CD4-positive, alpha-beta T cell (primary cell): ENCODE measurements at regions of chr7 and their contacts with region 1.

Region 1: DNA sequence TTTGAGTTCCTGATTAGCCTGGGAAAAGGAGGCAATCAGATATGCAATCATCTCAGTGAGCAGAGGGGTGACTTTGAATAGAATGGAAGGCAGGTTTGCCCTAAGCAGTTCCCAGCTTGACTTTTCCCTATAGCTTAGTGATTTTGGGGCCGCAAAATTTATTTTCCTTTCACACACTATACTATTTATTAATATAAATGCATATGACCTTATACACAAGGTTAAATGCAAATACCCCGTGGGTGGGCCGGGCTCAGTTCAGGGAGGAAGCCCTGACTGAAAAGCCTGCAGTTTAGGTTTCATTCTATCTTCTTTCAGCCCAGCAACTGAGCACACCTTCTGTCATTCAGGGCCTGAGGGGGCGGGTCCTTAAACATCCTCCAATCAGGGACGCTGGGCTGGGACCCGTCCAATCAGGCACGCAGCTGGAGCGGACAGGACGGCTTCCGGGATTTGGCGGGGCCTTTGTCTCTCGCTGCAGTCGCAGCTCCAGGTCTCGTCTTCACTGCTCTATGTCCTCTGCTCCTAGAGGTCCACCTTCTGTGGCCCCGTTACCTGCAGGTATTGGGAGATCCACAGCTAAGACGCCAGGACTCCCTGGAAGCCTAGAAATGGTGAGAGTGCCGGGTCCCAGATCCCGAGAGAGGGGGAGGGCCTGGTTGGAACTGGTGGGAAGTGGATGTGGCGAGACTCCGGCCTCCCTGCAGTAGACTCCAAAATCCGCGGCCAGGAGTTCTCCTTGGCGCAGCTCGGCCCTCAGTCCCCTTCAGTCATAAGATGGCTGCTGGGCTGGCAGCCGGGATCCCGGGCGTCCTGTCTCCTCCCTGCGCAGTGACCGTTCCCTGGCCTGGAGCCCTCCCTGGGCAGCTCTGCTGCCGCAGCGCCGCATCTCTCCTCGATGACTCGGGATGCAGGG is at the start of gene ZNF273:
- DNase-seq: peak; percentile 83 to 95 (median 87)
- ATAC-seq: peak; percentile 99
- H3K4me3 ChIP-seq: peak within 1 kb of the TSS; percentile 81
- H3K4me3 Mint-ChIP-seq: peak within 1 kb of the TSS; percentile 99
- H3K27ac ChIP-seq: peak within 1 kb of the TSS; percentile 26 to 64
- H3K27ac Mint-ChIP-seq: peak within 1 kb of the TSS; percentile 94
- H3K4me1 ChIP-seq: peaks cover 14% of the 10 kb centered on the region
- H3K4me1 Mint-ChIP-seq: peaks cover 51% of the 10 kb centered on the region
- H3K27me3 ChIP-seq: no peaks in the 10 kb centered on the region
- H3K27me3 Mint-ChIP-seq: no peaks in the 10 kb centered on the region
- CTCF ChIP-seq: no peak
- total RNA-seq, gene ZNF273: 6.8 TPM

Region 2: DNA sequence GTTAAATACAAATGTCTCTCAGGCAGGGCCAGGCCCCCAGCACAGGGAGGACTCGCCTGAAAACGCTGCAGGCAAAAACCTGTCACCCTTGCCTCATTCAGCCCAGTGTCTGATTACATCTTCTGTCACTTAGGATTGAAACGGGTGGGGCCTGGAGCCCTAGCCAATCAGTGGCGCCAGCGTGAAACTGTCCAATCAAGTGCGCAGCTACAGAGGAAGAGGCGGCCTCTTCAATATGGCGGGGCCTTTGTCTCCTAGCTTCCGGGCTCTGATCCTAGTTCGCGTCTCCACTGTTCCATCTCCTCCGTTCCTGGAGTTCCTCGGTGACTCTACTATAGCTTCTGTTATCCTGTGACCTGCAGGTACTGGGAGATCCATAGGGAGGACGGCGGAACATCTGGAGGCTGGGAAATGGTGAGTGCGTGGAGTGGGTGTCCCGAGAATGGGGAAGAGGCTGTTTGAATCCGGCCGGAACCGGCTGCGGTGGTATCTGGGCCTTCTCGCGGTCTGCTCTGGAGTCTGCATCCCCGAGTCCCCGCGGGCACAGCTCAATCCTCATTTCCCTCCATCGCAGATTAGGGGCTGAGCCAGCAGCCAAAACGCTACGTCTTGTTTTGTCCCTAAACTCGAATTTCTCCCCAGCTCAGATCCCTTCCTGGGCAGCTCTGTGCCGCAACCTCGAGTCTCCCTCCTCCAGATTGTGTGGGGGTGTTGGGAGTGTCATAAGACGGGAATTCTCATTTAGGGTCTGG is 589.1 kb before region 1 on chr7 and contains the start of gene ZNF736:
- CTCF ChIA-PET with region 1: no interaction called
- POLR2A ChIA-PET with region 1: interaction called, 7 read pairs
- intact Hi-C with region 1: loop called in 1 of 2 experiments (anchors 5 kb)
- DNase-seq: peak; percentile 76 to 95 (median 82)
- ATAC-seq: peak; percentile 100
- H3K4me3 ChIP-seq: peak within 1 kb of the TSS; percentile 99
- H3K4me3 Mint-ChIP-seq: peak within 1 kb of the TSS; percentile 96
- H3K27ac ChIP-seq: peak within 1 kb of the TSS in 1 of 2 donors; percentile 84
- H3K27ac Mint-ChIP-seq: peak within 1 kb of the TSS; percentile 93
- H3K4me1 ChIP-seq: peaks cover 23% of the 10 kb centered on the region
- H3K4me1 Mint-ChIP-seq: peaks cover 33% of the 10 kb centered on the region
- H3K27me3 ChIP-seq: no peaks in the 10 kb centered on the region
- H3K27me3 Mint-ChIP-seq: no peaks in the 10 kb centered on the region
- CTCF ChIP-seq: no peak
- total RNA-seq, gene ZNF736: 29.9 to 30.8 TPM

Region 3: GRCh38 chr7:64665980-64666662 is 236.9 kb before region 1 on chr7 and contains the start of gene ZNF107:
- CTCF ChIA-PET with region 1: no interaction called
- POLR2A ChIA-PET with region 1: interaction called, 19 read pairs
- intact Hi-C with region 1: loop called in 1 of 2 experiments (anchors 5 kb)
- DNase-seq: peak; percentile 71 to 96 (median 79)
- ATAC-seq: peak; percentile 95
- H3K4me3 ChIP-seq: peak within 1 kb of the TSS; percentile 83
- H3K4me3 Mint-ChIP-seq: peak within 1 kb of the TSS; percentile 98
- H3K27ac ChIP-seq: peak within 1 kb of the TSS; percentile 82
- H3K27ac Mint-ChIP-seq: peak within 1 kb of the TSS; percentile 98
- H3K4me1 ChIP-seq: peaks cover 23% of the 10 kb centered on the region
- H3K4me1 Mint-ChIP-seq: peaks cover 76% of the 10 kb centered on the region
- H3K27me3 ChIP-seq: no peaks in the 10 kb centered on the region
- H3K27me3 Mint-ChIP-seq: no peaks in the 10 kb centered on the region
- CTCF ChIP-seq: no peak
- total RNA-seq, gene ZNF107: 12.4 TPM

Region 4: GRCh38 chr7:64854969-64855368 is 48.1 kb before region 1 on chr7:
- CTCF ChIA-PET with region 1: no interaction called
- POLR2A ChIA-PET with region 1: no interaction called
- intact Hi-C with region 1: no loop called
- DNase-seq: no peak
- ATAC-seq: no peak
- H3K4me3 ChIP-seq: no peak overlapping the region
- H3K4me3 Mint-ChIP-seq: no peak overlapping the region
- H3K27ac ChIP-seq: no peak overlapping the region
- H3K27ac Mint-ChIP-seq: no peak overlapping the region
- H3K4me1 ChIP-seq: no peaks in the 10 kb centered on the region
- H3K4me1 Mint-ChIP-seq: no peaks in the 10 kb centered on the region
- H3K27me3 ChIP-seq: no peaks in the 10 kb centered on the region
- H3K27me3 Mint-ChIP-seq: no peaks in the 10 kb centered on the region
- CTCF ChIP-seq: no peak

Region 5: DNA sequence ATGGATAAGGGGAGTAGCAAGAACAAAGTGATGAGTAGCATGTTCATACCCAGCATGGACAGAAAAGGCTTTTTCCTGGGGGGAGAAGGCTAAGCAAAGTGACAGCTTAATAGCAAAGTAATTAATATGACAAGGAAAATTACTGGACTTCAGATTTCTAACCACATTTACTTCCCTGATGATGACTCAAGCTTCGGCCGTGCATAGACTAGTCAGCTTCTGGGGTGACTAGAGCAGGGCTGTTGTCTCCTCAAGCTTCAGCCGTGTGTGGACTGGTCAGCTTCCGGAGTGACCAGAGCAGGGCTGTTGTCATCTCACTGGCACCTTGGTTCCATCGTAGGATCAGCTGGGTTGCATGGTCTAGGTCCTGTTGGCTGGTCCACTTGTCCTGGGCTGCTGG is 89.9 kb after region 1 on chr7:
- CTCF ChIA-PET with region 1: no interaction called
- POLR2A ChIA-PET with region 1: no interaction called
- intact Hi-C with region 1: no loop called
- DNase-seq: no peak
- ATAC-seq: no peak
- H3K4me3 ChIP-seq: no peak overlapping the region
- H3K4me3 Mint-ChIP-seq: no peak overlapping the region
- H3K27ac ChIP-seq: no peak overlapping the region
- H3K27ac Mint-ChIP-seq: no peak overlapping the region
- H3K4me1 ChIP-seq: no peaks in the 10 kb centered on the region
- H3K4me1 Mint-ChIP-seq: no peaks in the 10 kb centered on the region
- H3K27me3 ChIP-seq: no peaks in the 10 kb centered on the region
- H3K27me3 Mint-ChIP-seq: no peaks in the 10 kb centered on the region
- CTCF ChIP-seq: no peak

Region 6: DNA sequence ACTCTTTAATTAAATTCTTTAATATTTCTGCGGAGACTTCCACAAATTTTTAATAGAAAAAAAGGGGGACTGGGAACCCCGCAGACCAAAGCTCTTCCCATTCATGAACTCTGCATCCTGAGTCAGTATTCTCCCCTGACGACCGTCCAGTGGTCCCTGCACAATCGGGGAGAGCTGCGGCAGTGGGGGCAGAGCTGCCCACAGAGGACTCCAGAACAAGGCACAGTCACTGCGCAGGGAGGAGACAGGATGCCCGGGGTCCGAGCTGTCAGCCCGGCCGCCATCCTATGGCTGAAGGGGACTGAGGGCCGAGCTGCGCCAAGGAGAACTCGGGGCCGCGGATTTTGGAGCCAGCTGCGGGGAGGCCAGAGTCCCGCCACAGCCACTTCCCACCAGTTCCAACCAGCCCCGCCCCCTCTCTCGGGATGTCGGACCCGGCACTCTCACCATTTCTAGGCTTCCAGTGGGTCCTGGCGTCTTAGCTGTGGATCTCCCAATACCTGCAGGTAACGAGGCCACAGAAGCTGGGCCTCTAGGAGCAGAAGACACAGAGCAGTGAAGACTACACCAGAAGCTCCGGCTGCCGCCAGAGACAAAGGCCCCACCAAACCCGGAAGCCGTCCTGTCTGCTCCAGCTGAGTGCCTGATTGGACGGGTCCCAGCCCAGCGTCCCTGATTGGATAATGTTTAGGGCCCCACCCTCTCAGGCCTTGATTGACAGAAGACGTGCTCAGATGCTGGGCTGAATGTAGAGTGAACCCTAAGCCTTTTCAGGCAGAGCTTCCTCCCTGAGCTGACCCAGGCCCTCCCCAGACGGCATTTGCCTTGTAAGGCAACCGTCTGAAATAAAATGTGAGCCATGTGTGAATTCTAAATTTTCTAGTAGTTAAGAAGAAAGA is 103.3 kb after region 1 on chr7 and contains the start of gene ERV3-1:
- CTCF ChIA-PET with region 1: no interaction called
- POLR2A ChIA-PET with region 1: interaction called, 16 read pairs
- intact Hi-C with region 1: loop called (anchors 2 to 5 kb)
- DNase-seq: peak; percentile 84 to 97 (median 90)
- ATAC-seq: peak; percentile 99
- H3K4me3 ChIP-seq: peak within 1 kb of the TSS; percentile 75
- H3K4me3 Mint-ChIP-seq: peak within 1 kb of the TSS; percentile 96
- H3K27ac ChIP-seq: peak within 1 kb of the TSS; percentile 49
- H3K27ac Mint-ChIP-seq: peak within 1 kb of the TSS; percentile 88
- H3K4me1 ChIP-seq: peaks cover 21% of the 10 kb centered on the region
- H3K4me1 Mint-ChIP-seq: peaks cover 45% of the 10 kb centered on the region
- H3K27me3 ChIP-seq: no peaks in the 10 kb centered on the region
- H3K27me3 Mint-ChIP-seq: no peaks in the 10 kb centered on the region
- CTCF ChIP-seq: no peak
- total RNA-seq, gene ERV3-1: 16.6 to 17.2 TPM

Region 7: DNA sequence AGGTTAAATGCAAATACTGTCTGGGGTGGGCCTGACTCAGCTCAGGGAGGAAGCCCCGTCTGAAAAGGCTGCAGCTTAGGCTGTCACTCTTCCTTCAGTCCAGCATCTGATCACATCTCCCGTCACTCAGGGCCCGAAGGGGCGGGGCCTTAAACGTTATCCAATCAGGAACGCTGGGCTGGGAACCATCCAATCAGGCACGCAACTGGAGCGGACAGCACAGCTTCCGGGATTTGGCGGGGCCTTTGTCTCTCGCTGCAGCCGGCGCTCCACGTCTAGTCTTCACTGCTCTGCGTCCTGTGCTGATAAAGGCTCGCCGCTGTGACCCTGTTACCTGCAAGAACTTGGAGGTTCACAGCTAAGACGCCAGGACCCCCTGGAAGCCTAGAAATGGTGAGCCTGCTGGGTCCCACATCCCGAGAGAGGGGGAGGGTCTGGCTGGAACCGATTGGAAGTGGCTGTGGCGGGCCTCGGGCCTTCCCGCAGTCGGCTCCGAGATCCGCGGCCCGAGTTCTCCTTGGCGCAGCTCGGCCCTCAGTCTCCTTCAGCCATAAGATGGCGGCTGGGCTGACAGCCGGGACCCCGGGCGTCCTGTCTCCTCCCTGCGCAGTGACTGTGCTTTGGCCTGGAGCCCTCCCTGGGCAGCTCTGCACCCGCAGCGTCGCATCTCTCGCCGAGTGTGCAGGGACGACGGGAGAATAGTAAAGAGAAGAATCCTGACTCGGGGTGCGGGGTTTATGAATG is 470.7 kb after region 1 on chr7 and contains the start of gene ZNF92:
- CTCF ChIA-PET with region 1: no interaction called
- POLR2A ChIA-PET with region 1: interaction called, 10 read pairs
- intact Hi-C with region 1: loop called (anchors 1 to 5 kb)
- DNase-seq: peak; percentile 89 to 98 (median 92)
- ATAC-seq: peak; percentile 98
- H3K4me3 ChIP-seq: peak within 1 kb of the TSS; percentile 97
- H3K4me3 Mint-ChIP-seq: peak within 1 kb of the TSS; percentile 95
- H3K27ac ChIP-seq: peak within 1 kb of the TSS; percentile 67 to 85
- H3K27ac Mint-ChIP-seq: peak within 1 kb of the TSS; percentile 94
- H3K4me1 ChIP-seq: peaks cover 38% of the 10 kb centered on the region
- H3K4me1 Mint-ChIP-seq: peaks cover 47% of the 10 kb centered on the region
- H3K27me3 ChIP-seq: no peaks in the 10 kb centered on the region
- H3K27me3 Mint-ChIP-seq: no peaks in the 10 kb centered on the region
- CTCF ChIP-seq: no peak
- total RNA-seq, gene ZNF92: 29.7 to 30.1 TPM

Region 8: GRCh38 chr7:66211429-66211828 is 1308.4 kb after region 1 on chr7:
- CTCF ChIA-PET with region 1: no interaction called
- POLR2A ChIA-PET with region 1: no interaction called
- intact Hi-C with region 1: no loop called
- DNase-seq: no peak
- ATAC-seq: no peak
- H3K4me3 ChIP-seq: no peak overlapping the region
- H3K4me3 Mint-ChIP-seq: no peak overlapping the region
- H3K27ac ChIP-seq: no peak overlapping the region
- H3K27ac Mint-ChIP-seq: no peak overlapping the region
- H3K4me1 ChIP-seq: peaks cover 3% of the 10 kb centered on the region
- H3K4me1 Mint-ChIP-seq: peaks cover 26% of the 10 kb centered on the region
- H3K27me3 ChIP-seq: peaks cover 2 to 10% of the 10 kb centered on the region in 2 experiments
- H3K27me3 Mint-ChIP-seq: peaks cover 14% of the 10 kb centered on the region
- CTCF ChIP-seq: no peak